Mammary epithelial cell (primary cell): ENCODE measurements at regions of chr3 and their contacts with region 1.

Region 1: DNA sequence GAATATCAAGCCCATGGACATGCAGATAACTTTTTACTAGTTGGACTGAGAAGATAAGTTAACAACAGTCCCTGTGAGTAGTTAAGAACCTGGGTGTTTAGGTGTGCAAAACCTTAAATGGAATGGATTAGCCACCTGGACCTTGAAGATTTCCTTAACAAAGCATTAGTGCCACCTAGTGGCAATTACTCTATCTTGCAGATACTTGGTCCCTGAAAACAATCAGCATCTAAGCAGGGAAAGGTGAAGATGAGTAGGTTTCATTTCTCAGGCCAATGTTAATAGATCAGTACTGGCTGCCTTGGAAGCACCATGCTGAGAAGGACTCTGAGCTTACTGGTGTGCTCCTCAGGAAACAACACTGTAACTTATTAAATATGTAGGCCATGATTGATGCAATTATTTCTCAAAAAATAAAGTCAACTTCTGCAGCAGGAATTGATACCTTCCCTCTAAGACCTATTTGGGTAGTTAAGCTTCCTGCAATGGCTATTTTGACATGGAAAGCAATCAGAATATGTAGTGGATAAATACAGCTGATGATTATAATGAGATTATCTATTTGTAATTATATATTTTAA is 329.4 kb downstream of the TBC1D5 start:
- DNase-seq: peak; percentile 58
- H3K4me3 ChIP-seq: no peak overlapping the region
- H3K27ac ChIP-seq: no peak overlapping the region
- H3K4me1 ChIP-seq: no peaks in the 10 kb centered on the region
- H3K27me3 ChIP-seq: no peaks in the 10 kb centered on the region
- CTCF ChIP-seq: peak; percentile 78 to 80

Region 2: GRCh38 chr3:16589867-16590624 is 823.0 kb before region 1 on chr3:
- CTCF ChIA-PET with region 1: interaction called, 3 read pairs
- dilution Hi-C with region 1: no loop called
- in situ Hi-C with region 1: loop called in 1 of 2 experiments (anchors 25 kb)
- intact Hi-C with region 1: no loop called
- DNase-seq: no peak
- H3K4me3 ChIP-seq: no peak overlapping the region
- H3K27ac ChIP-seq: no peak overlapping the region
- H3K4me1 ChIP-seq: no peaks in the 10 kb centered on the region
- H3K27me3 ChIP-seq: peaks cover 2% of the 10 kb centered on the region
- CTCF ChIP-seq: no peak

Region 3: DNA sequence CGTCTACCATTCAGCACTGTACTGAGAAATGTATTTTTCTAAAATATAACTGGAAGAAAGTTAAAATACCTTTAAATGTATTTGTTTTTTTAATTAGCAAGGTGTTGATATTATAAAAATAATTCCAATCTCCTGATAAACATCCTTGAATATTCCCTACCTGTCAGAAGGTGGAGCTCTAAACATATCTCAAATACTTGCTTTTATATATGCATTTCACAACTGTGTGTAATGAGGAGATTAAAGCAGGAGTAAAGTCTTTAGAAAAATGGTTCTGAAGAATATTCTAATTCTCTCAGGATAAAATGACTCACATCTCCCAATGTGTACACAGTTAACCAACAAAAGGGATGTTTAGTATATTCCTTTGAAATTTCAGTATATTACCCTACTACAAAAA is 105.6 kb before region 1 on chr3:
- CTCF ChIA-PET with region 1: no interaction called
- dilution Hi-C with region 1: no loop called
- in situ Hi-C with region 1: no loop called
- intact Hi-C with region 1: loop called (anchors 1 kb)
- DNase-seq: no peak
- H3K4me3 ChIP-seq: no peak overlapping the region
- H3K27ac ChIP-seq: no peak overlapping the region
- H3K4me1 ChIP-seq: no peaks in the 10 kb centered on the region
- H3K27me3 ChIP-seq: no peaks in the 10 kb centered on the region
- CTCF ChIP-seq: peak in 1 of 2 donors; percentile 29

Region 4: GRCh38 chr3:17372362-17373210 is 40.5 kb before region 1 on chr3:
- CTCF ChIA-PET with region 1: no interaction called
- dilution Hi-C with region 1: no loop called
- in situ Hi-C with region 1: no loop called
- intact Hi-C with region 1: no loop called
- DNase-seq: peak; percentile 9
- H3K4me3 ChIP-seq: no peak overlapping the region
- H3K27ac ChIP-seq: no peak overlapping the region
- H3K4me1 ChIP-seq: no peaks in the 10 kb centered on the region
- H3K27me3 ChIP-seq: no peaks in the 10 kb centered on the region
- CTCF ChIP-seq: no peak